ENCODE measurements at regions of chr9 and their contacts with region 1.

Region 1: GRCh38 chr9:121545875-121546423 is 46.3 kb upstream of the GGTA1 start:
- DNase-seq: peak; percentile 82 to 97
- H3K4me3 ChIP-seq: no peak overlapping the region
- H3K27ac ChIP-seq: no peak overlapping the region
- H3K4me1 ChIP-seq: peaks cover 9% of the 10 kb centered on the region
- H3K27me3 ChIP-seq: no peaks in the 10 kb centered on the region
- CTCF ChIP-seq: peak; percentile 95

Region 2: DNA sequence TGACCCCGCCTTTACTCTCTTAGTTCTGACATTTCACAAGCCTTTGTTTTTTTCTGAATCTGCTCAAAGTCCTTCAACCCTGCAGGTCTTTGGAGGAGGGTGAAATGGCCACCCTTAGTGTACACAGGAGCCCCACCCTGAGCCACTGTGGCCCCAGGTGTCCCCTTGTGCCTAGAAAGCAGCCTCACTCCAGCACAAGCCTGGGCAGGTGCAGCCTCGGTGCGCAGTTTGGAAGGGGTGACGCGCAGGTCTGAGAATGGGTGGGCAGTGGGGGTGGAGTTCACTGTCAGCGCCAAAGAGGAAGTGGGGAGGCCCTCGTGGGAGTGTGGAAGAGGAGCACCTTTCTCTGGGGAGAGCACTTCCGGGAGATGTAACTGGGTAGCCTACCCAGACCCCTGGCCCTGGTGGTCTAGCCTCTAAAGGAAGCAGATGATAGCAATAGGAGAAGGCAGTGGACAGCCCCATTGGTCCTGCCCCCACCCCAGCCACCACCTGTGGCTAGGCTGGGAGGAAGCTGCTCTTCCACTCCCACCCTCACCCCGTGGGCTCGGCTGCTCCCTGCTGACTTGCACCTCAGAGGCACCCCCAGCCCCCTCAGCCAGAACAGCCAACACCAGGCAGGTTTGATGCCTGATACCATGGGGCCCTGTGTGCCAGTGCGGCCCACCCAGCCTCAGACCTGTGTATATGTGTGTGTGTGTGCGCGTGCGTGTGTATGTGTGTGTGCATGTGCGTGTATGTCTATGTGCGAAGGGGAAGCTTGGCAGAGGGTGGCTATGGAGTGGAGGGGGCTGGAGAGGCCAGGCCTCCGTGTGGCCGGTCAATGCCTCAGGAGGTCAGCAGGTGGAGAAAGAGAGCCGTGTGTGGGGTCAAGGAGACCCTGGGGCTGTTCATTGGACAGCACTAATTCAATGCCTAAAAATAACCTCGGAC is 88.6 kb after region 1 on chr9:
- CTCF ChIA-PET with region 1: interaction called, 6 read pairs
- POLR2A ChIA-PET with region 1: no interaction called
- intact Hi-C with region 1: loop called (anchors 5 kb)
- DNase-seq: peak in 1 of 2 experiments; percentile 39
- H3K4me3 ChIP-seq: no peak overlapping the region
- H3K27ac ChIP-seq: no peak overlapping the region
- H3K4me1 ChIP-seq: peaks cover 9% of the 10 kb centered on the region; the same call in 1 of the 2 replicates
- H3K27me3 ChIP-seq: no peaks in the 10 kb centered on the region
- CTCF ChIP-seq: peak; percentile 60

Region 3: DNA sequence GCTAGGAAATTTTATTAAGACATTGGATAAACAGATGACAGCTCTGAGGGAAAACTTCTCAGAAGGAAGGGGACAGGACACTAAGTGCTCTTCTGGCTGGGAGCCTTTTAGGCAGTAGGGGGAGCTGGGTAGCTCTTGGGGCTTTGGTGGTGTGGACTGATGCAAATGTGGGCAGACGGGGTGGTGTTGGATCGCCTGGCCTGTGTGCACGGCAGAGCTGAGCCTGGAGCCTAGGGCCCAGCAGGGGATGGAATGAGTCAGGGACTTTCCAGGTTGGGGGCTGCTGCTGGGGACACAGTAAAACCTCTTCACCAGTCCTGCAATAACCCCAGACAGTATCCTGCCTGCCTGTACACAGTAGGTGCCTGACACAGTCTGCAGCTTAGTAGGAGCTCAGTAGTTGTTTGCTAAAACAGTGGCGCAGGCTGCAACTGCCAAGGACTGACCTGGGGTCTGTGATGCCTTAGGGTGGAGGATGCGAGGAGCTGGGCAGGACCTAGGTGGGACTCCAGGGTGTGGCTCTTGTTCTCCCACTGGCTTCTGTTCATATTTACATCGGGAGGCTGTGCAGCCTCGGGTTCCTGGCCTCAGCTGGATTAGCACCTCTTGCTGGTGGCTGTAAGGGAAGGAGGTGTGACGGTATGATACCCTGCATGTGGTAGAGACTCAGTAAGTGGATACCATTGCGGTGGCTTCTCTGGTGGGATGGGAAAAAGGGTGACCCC is 189.3 kb after region 1 on chr9:
- CTCF ChIA-PET with region 1: no interaction called
- POLR2A ChIA-PET with region 1: no interaction called
- intact Hi-C with region 1: loop called (anchors 5 kb)
- DNase-seq: peak; percentile 56 to 62
- H3K4me3 ChIP-seq: peak overlapping the region; percentile 73; the same call in 1 of the 2 replicates
- H3K27ac ChIP-seq: peak overlapping the region; percentile 66
- H3K4me1 ChIP-seq: peaks cover 51% of the 10 kb centered on the region
- H3K27me3 ChIP-seq: no peaks in the 10 kb centered on the region
- CTCF ChIP-seq: peak; percentile 65

Region 4: GRCh38 chr9:121884057-121884541 is 338.1 kb after region 1 on chr9:
- CTCF ChIA-PET with region 1: no interaction called
- POLR2A ChIA-PET with region 1: no interaction called
- intact Hi-C with region 1: loop called (anchors 5 kb)
- DNase-seq: no peak
- H3K4me3 ChIP-seq: no peak overlapping the region
- H3K27ac ChIP-seq: no peak overlapping the region
- H3K4me1 ChIP-seq: no peaks in the 10 kb centered on the region
- H3K27me3 ChIP-seq: no peaks in the 10 kb centered on the region
- CTCF ChIP-seq: no peak

Region 5: GRCh38 chr9:122092611-122093506 is 546.9 kb after region 1 on chr9 and contains the start of gene TTLL11:
- CTCF ChIA-PET with region 1: interaction called, 8 read pairs
- POLR2A ChIA-PET with region 1: no interaction called
- intact Hi-C with region 1: loop called (anchors 2 kb)
- DNase-seq: peak; percentile 82 to 94
- H3K4me3 ChIP-seq: peak within 1 kb of the TSS; percentile 86
- H3K27ac ChIP-seq: no peak within 1 kb of the TSS
- H3K4me1 ChIP-seq: peaks cover 8% of the 10 kb centered on the region
- H3K27me3 ChIP-seq: peaks cover 12% of the 10 kb centered on the region; the same call in 1 of the 2 replicates
- CTCF ChIP-seq: no peak
- total RNA-seq, gene TTLL11: 2.0 and 2.3 TPM in 2 replicates

Region 6: GRCh38 chr9:122350638-122351355 is 804.8 kb after region 1 on chr9:
- CTCF ChIA-PET with region 1: no interaction called
- POLR2A ChIA-PET with region 1: no interaction called
- intact Hi-C with region 1: loop called (anchors 2 kb)
- DNase-seq: peak in 1 of 2 experiments; percentile 82
- H3K4me3 ChIP-seq: no peak overlapping the region
- H3K27ac ChIP-seq: no peak overlapping the region
- H3K4me1 ChIP-seq: no peaks in the 10 kb centered on the region
- H3K27me3 ChIP-seq: peaks cover 21% of the 10 kb centered on the region
- CTCF ChIP-seq: peak; percentile 93

Region 7: DNA sequence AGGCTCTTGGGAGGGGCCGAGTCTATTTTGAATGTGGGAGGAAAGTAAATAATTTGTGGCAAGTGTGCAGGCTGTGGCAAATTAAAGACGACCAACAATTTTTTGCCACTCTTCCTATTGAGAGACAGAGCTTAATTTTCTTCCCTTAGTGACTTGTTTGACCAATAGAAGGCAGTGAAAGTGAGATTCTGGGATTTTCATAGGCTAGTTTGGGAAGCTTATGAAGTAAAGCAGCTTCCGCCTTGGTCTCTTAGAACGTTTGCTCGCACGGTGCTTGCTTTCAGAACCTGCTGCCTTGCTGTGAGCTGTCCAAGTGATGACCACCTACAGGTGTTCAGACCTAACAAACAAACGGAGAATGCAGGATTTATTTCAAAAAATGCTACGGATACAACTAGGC is 1000.2 kb after region 1 on chr9:
- CTCF ChIA-PET with region 1: no interaction called
- POLR2A ChIA-PET with region 1: no interaction called
- intact Hi-C with region 1: no loop called
- DNase-seq: no peak
- H3K4me3 ChIP-seq: no peak overlapping the region
- H3K27ac ChIP-seq: no peak overlapping the region
- H3K4me1 ChIP-seq: no peaks in the 10 kb centered on the region
- H3K27me3 ChIP-seq: peaks cover 19% of the 10 kb centered on the region
- CTCF ChIP-seq: no peak

Measured in PC-9 (cell line).